ENCODE measurements at regions of chr13 and their contacts with region 1.

Region 1: DNA sequence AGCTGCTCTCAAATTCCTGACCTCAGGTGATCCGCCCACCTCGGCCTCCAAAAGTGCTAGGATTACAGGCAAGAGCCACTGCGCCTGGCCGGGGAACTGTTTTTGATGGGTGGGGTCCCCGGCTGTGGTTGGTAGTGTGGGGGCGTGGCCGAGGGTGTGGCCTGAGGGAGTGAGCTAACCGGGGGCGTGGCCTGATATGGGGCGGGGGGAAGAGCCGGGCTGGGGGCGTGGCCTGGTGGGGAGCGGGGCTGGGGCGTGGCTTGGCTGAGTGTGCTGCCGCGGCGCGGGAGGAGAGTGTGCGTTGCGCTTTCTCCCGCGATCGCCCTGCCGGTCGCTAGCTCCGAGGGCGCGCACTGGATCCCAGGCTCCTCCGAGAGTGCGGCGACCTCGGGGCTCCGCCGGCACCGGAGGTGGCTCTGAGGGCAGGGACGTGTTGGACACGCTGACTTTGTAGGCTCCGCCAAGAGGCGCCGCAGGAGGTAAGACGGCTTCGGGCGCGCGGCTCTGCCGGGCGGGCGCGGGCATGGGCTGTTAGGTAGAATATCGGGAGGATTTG is at the start of gene SPATA13:
- DNase-seq: peak; percentile 92 to 94
- ATAC-seq: peak; percentile 97 to 99 (median 98)
- H3K4me3 ChIP-seq: peak within 1 kb of the TSS; percentile 79 to 96 (median 88)
- H3K27ac ChIP-seq: peak within 1 kb of the TSS; percentile 71 to 87 (median 81)
- H3K4me1 ChIP-seq: peaks cover 0 to 41% (median 21%) of the 10 kb centered on the region in 9 donors
- H3K27me3 ChIP-seq: peaks cover 0 to 22% (median 6%) of the 10 kb centered on the region in 7 donors
- CTCF ChIP-seq: no peak
- total RNA-seq, gene SPATA13: 6.0 to 19.2 (median 10.2) TPM

Region 2: DNA sequence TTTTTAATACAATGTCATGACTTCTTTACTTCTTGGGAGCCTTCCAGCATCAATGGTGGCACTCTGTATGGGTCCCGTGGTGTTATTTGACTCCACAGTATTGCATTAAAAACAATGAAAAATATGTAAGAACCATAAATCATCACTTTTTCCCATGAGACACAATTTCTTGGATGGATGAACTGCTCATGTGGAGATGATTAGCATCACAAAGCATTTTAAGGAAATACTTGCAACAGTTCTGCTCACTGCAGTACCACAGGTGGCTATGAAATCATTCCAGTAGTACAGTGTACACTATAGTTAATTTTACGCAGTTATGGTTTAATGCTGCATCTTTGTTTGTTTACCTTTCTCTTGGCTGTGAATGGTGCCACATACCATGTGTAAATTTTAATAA is 226.0 kb before region 1 on chr13:
- intact Hi-C with region 1: no loop called
- DNase-seq: no peak
- ATAC-seq: no peak
- H3K4me3 ChIP-seq: no peak overlapping the region
- H3K27ac ChIP-seq: no peak overlapping the region
- H3K4me1 ChIP-seq: no peaks in the 10 kb centered on the region
- H3K27me3 ChIP-seq: peaks cover 0 to 12% (median 0%) of the 10 kb centered on the region in 7 donors
- CTCF ChIP-seq: no peak

Region 3: GRCh38 chr13:24127038-24127643 is 33.4 kb before region 1 on chr13:
- intact Hi-C with region 1: no loop called
- DNase-seq: no peak
- ATAC-seq: no peak
- H3K4me3 ChIP-seq: no peak overlapping the region
- H3K27ac ChIP-seq: no peak overlapping the region
- H3K4me1 ChIP-seq: peaks cover 0 to 33% (median 15%) of the 10 kb centered on the region in 9 donors
- H3K27me3 ChIP-seq: peaks cover 0 to 9% (median 3%) of the 10 kb centered on the region in 7 donors
- CTCF ChIP-seq: no peak

Region 4: DNA sequence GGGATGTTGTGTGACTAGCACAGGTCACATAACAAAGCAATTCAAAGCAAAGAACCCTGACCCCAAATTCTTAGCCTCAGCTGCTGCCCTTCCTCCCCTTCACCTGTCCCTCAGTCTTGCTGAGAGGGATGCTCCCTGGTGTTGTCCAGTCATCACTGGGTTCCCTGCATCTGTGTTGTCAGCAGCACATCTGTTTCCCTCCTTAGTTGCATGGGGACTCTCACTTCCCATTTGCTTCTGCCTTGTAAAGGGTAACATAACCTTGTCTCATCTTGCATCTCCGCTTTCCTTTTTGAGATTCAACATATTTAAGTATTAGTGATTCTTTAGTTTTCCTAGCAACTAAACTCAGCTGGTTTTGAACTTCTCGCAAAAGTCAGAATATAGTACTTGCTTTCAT is 54.0 kb after region 1 on chr13:
- intact Hi-C with region 1: loop called in 4 of 10 experiments (anchors 5 kb)
- DNase-seq: no peak
- ATAC-seq: no peak
- H3K4me3 ChIP-seq: no peak overlapping the region
- H3K27ac ChIP-seq: peak overlapping the region in 5 of 10 donors; percentile 7 to 72 (median 53)
- H3K4me1 ChIP-seq: peaks cover 0 to 53% (median 41%) of the 10 kb centered on the region in 9 donors
- H3K27me3 ChIP-seq: no peaks in the 10 kb centered on the region
- CTCF ChIP-seq: no peak